Left lung (tissue), 14 donors: ENCODE measurements at regions of chr19 and their contacts with region 1.

Region 1: DNA sequence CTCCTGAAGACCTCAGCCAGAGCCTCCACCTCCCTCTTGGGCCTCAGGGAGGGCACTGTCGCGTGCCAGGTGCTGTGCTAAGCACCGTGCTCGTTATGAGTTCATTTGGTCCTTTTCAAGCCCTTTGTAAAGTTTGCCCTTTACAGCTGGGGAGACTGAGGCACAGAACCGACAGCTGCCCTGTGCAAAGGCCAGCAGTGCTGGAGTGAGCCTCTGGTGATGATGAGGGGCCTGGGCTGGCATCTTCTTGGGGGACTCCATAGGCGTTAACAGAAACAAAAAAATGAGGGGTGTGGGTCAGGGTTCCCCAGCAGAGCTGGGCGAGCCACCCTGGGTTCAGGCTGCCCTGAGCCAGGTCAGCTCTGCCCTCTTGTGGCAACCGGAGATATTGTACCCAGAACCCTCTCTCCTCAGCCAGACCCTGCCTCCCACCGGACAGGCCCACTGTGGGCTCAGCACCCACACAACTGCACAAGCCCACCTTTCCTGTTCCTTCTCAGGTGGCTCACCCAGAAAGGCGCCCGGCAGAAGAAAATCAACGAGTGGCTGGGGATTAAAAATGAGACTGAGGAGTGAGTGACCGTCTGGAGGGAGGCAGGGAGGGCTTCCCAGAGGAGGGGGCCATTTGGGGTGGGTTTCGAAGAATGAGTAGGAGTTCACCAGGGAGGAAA is 5.5 kb upstream of the IFI30 start:
- DNase-seq: peak in 2 of 4 donors; percentile 37 to 51
- ATAC-seq: peak; percentile 64
- H3K4me3 ChIP-seq: no peak overlapping the region
- H3K27ac ChIP-seq: no peak overlapping the region
- H3K4me1 ChIP-seq: peaks cover 0 to 52% of the 10 kb centered on the region in 2 donors
- H3K27me3 ChIP-seq: no peaks in the 10 kb centered on the region
- CTCF ChIP-seq: peak; percentile 59 to 86

Region 2: DNA sequence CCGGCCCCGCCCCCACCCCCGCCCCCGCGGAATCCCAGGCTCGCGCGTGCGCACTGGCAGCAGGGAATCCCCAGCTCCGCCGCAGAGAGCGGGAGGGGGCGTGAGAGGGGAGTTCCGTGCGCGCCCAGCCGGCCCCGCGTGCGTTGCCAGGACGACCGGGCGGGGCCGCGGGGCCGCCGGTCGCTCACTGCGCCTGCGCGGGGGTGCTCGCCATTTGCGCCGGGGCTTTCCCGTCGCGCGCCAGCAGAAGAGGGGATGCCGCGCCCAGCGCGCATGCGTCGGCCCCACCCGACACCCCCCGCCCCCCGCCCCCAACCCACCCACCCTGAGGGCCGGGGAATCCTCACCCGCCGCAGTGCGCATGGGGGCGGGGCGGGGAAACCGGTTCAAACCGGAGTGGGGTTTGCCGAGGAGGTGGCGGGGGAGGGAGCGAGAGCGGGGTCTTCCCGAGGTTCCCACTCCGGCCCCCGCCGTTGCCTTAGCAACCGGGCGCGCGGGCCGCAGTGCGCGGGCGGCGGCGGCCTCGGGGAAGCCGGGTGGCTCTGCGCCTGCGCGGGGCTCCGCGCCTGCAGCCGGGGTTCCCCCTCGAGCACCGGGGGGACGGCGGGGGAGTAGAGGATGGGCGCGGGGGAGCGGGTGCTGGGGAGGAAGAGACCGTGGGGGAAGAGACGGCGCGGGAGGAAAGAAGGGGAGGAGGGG is 220.1 kb before region 1 on chr19:
- intact Hi-C with region 1: no loop called
- DNase-seq: peak; percentile 93 to 98 (median 96)
- ATAC-seq: peak; percentile 89
- H3K4me3 ChIP-seq: peak overlapping the region; percentile 57 to 68
- H3K27ac ChIP-seq: peak overlapping the region; percentile 33 to 68
- H3K4me1 ChIP-seq: peaks cover 9 to 58% of the 10 kb centered on the region in 2 donors
- H3K27me3 ChIP-seq: peaks cover 39 to 49% of the 10 kb centered on the region in 2 donors
- CTCF ChIP-seq: no peak

Region 3: GRCh38 chr19:18112989-18113478 is 55.1 kb before region 1 on chr19:
- intact Hi-C with region 1: loop called in 1 of 2 experiments (anchors 5 kb)
- DNase-seq: peak; percentile 65 to 95 (median 87)
- ATAC-seq: peak; percentile 61
- H3K4me3 ChIP-seq: no peak overlapping the region
- H3K27ac ChIP-seq: peak overlapping the region in 1 of 2 donors; percentile 23
- H3K4me1 ChIP-seq: peaks cover 9 to 70% of the 10 kb centered on the region in 2 donors
- H3K27me3 ChIP-seq: peaks cover 0 to 19% of the 10 kb centered on the region in 2 donors
- CTCF ChIP-seq: peak; percentile 74 to 90